ENCODE measurements at regions of chr10 and their contacts with region 1.

Region 1: DNA sequence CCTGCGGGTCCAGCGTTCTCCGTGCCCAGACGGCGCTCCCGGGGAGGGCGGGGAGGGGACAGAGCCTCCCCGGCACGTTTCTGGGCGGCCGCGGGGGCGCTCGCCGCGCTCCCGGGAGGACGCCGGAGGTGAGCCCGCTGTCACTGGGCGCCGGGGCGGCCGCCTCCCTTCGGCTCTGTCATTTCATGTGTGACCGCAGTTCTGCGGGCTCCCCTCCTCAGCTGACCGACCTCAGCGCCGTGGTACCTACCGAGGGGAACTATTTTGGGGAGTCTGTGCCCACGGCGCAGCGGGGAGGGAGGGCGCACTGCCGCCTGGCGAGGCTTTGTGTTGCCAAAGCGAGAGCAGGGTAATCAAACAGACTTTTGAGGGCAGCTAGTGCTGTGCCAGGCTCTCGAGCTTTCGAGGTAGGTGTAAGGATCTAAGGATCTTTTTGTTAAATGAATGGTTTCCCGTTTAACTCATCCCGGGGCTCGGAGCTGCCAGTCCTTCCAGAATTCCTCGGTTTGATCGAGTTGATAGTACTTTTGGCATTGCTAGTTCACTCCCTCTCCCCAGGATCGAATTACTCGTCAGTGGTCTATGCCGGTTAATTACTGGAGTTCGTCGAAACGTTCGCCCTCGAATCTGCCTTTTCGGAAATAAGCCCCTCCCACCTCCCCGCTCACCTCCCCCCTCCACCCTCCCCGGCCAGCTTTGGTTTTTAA is 1.9 kb downstream of the ARID5B start:
- DNase-seq: peak; percentile 78
- H3K4me3 ChIP-seq: peak overlapping the region; percentile 67 to 75 (median 68)
- H3K27ac ChIP-seq: peak overlapping the region; percentile 93 to 98 (median 96)
- H3K4me1 ChIP-seq: peaks cover 0 to 36% (median 14%) of the 10 kb centered on the region in 4 donors
- H3K27me3 ChIP-seq: no peaks in the 10 kb centered on the region
- CTCF ChIP-seq: no peak
- EP300 ChIP-seq: no peak
- POLR2A ChIP-seq: peak in 1 of 2 donors; percentile 46

Region 2: DNA sequence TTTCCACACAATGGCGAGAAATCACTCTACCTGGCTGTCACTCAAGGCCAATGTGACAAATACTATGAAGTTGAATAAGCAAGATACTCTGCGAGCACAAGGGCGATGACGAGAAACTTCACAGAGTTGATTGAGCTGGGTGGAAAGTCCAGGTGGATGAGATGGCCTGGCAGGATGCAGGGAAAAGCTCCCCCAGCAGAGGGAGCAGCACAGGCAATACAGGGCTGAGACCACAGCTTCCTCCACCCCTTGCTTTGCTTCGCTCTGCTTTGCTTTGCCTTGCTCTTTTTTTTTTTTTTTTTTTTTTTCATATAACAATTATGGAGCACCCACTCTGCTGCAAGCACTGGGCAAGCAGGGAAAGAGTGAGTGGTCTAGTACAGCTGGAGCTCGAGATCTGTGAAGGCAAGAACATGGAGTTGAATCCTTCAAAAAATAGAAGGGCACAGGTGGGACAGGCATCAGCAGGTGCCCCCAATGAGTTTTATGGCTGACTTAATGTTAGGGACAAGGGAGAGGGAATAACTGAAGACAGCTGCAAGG is 152.4 kb before region 1 on chr10:
- intact Hi-C with region 1: loop called (anchors 5 kb)
- DNase-seq: no peak
- H3K4me3 ChIP-seq: no peak overlapping the region
- H3K27ac ChIP-seq: no peak overlapping the region
- H3K4me1 ChIP-seq: peaks cover 0 to 52% (median 29%) of the 10 kb centered on the region in 4 donors
- H3K27me3 ChIP-seq: no peaks in the 10 kb centered on the region
- CTCF ChIP-seq: peak in 3 of 4 experiments; percentile 36 to 48 (median 38)
- EP300 ChIP-seq: no peak
- POLR2A ChIP-seq: no peak

Region 3: DNA sequence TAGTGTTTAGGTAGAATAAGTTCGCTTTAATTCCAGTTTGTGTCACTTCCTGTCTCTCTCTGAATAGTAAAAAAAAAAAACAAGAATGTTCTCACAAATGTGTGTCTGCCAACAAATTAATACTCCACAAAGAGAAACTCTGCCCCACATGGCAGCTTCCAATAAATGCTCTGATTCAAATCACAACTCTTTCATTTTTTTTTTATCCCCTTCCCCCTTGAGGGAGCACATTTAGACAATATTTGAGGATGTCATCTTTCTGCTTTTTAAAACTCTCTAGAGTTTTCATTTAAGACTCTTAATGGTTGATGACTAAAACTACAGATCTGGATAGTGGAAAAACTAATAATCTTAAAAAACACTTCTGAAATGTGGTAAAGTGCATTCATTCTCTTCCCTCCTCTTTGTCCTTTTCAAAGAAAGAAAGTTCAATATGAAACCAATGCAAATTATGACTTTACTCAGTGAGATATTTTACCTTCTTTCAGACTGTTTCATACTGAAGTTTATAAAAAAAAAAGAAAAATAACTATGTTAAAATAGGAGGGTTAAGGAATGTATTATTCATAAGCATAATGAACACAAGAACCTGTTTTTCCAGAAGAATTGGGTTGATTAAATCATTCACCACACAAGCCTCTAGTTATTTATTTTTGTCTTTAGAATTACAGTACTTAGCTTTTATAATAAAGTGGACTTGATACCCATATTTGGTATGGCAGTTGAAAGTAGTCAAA is 40.5 kb after region 1 on chr10:
- intact Hi-C with region 1: loop called (anchors 5 kb)
- DNase-seq: no peak
- H3K4me3 ChIP-seq: no peak overlapping the region
- H3K27ac ChIP-seq: peak overlapping the region; percentile 70 to 84 (median 80)
- H3K4me1 ChIP-seq: peaks cover 0 to 58% (median 44%) of the 10 kb centered on the region in 4 donors
- H3K27me3 ChIP-seq: no peaks in the 10 kb centered on the region
- CTCF ChIP-seq: peak in 1 of 4 experiments; percentile 10
- EP300 ChIP-seq: no peak
- POLR2A ChIP-seq: no peak

Region 4: DNA sequence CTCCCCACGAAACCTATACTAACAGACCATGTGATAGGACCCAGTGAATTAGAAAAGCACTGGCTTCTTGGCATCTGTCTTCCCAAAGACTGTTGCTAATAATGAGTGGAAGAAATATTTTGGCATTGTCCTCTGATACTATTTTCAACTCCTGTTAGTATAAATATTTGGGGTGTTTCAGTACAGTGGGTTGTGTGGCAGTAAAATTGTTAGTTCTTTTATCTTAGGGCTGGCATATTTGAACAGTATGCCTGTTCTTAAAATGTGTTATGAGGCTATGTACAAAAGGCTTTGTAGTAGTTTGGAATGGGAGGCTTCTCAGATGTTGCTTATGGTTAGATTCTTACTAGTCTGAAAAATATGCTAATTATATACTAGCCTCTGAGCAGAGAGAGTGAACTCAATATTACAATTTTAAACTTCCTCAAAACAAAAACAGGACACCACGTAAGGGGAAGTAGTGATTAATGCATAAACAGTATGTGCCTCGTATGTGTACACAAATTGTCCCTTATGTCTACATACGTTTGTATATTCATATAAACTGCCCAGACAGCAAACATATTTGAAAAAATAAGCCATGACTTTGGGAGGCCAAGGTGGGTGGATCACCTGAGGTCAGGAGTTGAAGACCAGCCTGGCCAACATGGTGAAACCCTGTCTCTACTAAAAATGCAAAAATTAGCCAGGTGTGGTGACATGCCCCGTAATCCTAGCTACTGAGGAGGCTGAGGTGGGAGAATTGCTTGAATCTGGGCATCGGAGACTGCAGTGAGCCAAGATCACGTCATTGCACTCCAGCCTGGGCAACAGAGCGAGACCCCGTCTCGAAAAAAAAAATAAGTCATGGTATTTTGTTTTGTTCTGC is 113.5 kb after region 1 on chr10:
- intact Hi-C with region 1: loop called (anchors 5 kb)
- DNase-seq: no peak
- H3K4me3 ChIP-seq: no peak overlapping the region
- H3K27ac ChIP-seq: peak overlapping the region; percentile 61 to 83 (median 72)
- H3K4me1 ChIP-seq: peaks cover 0 to 60% (median 54%) of the 10 kb centered on the region in 4 donors
- H3K27me3 ChIP-seq: no peaks in the 10 kb centered on the region
- CTCF ChIP-seq: no peak
- EP300 ChIP-seq: no peak
- POLR2A ChIP-seq: no peak

Region 5: DNA sequence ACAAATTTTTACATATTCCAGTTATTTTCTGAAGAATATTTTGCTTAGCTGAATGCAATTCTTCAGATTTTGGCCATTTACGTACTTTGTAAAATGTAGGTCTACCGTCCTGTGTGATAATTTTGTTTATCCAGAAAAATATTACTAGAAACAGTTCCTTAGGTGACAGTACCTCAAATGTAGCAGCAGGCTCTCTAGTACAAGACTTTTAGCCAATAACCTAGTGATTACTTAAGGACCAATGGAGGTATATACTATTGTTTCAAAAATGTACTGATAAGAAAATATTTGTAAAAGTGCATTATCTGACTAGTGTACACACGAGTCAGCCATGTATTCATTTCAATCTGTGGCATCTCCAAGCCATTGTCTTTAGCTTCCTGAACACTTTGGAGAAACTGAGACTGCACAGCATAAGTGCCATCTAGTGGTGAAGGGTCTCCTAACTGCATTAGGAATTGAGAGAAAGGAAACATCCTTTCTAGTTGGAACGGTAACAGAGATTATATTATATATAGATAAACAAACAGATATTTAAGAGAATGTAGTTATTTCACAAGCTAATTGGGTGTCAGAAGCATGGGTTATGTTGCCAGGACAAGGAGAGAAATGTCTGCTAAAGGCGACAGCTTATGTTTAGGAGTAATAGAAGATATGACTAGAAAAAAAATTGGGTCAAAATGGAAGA is 341.6 kb after region 1 on chr10:
- intact Hi-C with region 1: loop called (anchors 2 kb)
- DNase-seq: no peak
- H3K4me3 ChIP-seq: no peak overlapping the region
- H3K27ac ChIP-seq: peak overlapping the region in 1 of 4 donors; percentile 32
- H3K4me1 ChIP-seq: peaks cover 0 to 23% (median 6%) of the 10 kb centered on the region in 4 donors
- H3K27me3 ChIP-seq: no peaks in the 10 kb centered on the region
- CTCF ChIP-seq: peak; percentile 75 to 89 (median 80)
- EP300 ChIP-seq: no peak
- POLR2A ChIP-seq: no peak